Caco-2 (cell line): ENCODE measurements at regions of chr3 and their contacts with region 1.

Region 1: DNA sequence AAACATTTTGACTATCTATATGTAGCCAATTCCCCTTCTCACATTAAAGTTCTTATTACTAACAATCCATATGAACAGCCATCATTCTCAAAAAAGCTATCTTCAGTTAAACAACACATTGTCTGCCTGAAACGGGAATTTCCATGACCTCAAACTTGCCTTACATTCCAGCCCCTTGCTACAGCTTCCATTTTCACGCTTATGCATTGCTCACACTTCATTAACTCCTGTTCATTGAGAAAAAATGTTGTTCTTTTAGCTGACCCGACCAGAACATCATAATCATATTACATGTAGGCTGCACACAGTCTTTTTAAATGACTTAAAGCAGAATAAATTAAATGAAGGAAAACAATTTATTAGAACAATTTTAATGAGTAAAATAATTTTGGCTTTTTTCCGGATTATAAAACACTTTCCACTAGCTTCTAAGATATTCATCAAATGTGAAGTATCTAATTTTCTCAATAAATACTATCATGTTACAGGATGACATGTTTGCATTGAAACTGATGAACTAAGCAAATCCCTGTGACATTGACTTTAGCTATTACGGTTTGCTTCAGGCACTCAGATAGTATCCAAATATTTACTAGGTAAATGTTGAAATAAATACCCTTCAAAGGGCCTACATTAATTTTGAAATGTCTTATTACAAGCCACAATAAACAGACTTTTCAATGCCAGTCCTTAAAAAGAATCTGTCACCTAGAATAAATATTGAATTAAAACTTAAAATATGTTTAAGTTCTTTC is 49.9 kb downstream of the P3H2 start:
- DNase-seq: no peak
- H3K4me3 ChIP-seq: no peak overlapping the region
- H3K4me3 Mint-ChIP-seq: no peak overlapping the region
- H3K27ac Mint-ChIP-seq: no peak overlapping the region
- H3K4me1 ChIP-seq: no peaks in the 10 kb centered on the region
- H3K4me1 Mint-ChIP-seq: peaks cover 8% of the 10 kb centered on the region
- H3K27me3 ChIP-seq: no peaks in the 10 kb centered on the region
- H3K27me3 Mint-ChIP-seq: no peaks in the 10 kb centered on the region
- CTCF ChIP-seq: no peak

Region 2: GRCh38 chr3:190038050-190038933 is 32.5 kb before region 1 on chr3:
- CTCF ChIA-PET with region 1: no interaction called
- POLR2A ChIA-PET with region 1: interaction called, 12 read pairs
- intact Hi-C with region 1: no loop called
- DNase-seq: peak; percentile 76 to 79
- H3K4me3 ChIP-seq: no peak overlapping the region
- H3K4me3 Mint-ChIP-seq: peak overlapping the region; percentile 31
- H3K27ac Mint-ChIP-seq: peak overlapping the region; percentile 46
- H3K4me1 ChIP-seq: peaks cover 9% of the 10 kb centered on the region
- H3K4me1 Mint-ChIP-seq: peaks cover 18% of the 10 kb centered on the region
- H3K27me3 ChIP-seq: no peaks in the 10 kb centered on the region
- H3K27me3 Mint-ChIP-seq: no peaks in the 10 kb centered on the region
- CTCF ChIP-seq: no peak